ENCODE measurements at regions of chr14 and their contacts with region 1.

Region 1: GRCh38 chr14:97432586-97432985 is 635.4 kb downstream of the VRK1 start:
- DNase-seq: no peak
- ATAC-seq: no peak
- H3K4me3 Mint-ChIP-seq: no peak overlapping the region
- H3K27ac Mint-ChIP-seq: no peak overlapping the region
- H3K4me1 Mint-ChIP-seq: no peaks in the 10 kb centered on the region
- H3K27me3 Mint-ChIP-seq: no peaks in the 10 kb centered on the region

Region 2: DNA sequence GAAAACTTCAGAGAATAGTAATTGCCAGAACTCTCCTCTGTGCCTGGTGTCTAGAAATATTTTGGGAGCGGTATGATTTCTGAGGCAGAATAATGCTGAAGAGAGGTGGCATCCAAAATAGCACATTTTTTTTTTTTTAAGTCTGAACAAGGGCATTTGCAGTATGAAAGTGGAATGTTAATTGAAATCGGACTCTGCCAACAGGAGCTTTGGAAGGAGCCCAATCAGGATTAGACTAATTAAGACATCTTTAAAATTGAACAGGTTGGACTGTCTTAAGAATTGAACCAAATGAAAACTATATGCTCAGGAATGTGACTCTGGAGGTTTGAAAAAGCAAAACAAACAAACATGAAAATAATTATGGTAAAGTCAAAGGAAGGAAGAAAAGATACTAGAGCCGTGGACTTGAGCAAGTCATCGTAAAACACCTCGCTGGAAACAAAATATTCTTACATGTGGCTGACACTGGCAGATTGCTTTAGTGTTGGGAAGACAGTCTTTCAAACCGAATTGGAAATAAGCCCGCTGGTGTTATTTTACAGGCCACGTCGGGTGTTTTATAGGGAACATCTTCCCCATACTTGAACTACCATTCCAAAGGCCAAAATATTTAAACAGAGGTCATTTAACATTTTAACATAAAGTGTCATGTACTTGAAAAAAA is 199.1 kb before region 1 on chr14:
- CTCF ChIA-PET with region 1: no interaction called
- POLR2A ChIA-PET with region 1: no interaction called
- intact Hi-C with region 1: no loop called
- DNase-seq: no peak
- ATAC-seq: no peak
- H3K4me3 Mint-ChIP-seq: no peak overlapping the region
- H3K27ac Mint-ChIP-seq: no peak overlapping the region
- H3K4me1 Mint-ChIP-seq: no peaks in the 10 kb centered on the region
- H3K27me3 Mint-ChIP-seq: no peaks in the 10 kb centered on the region

Region 3: GRCh38 chr14:97499792-97500495 is 67.4 kb after region 1 on chr14:
- CTCF ChIA-PET with region 1: no interaction called
- POLR2A ChIA-PET with region 1: no interaction called
- intact Hi-C with region 1: loop called in 1 of 2 experiments (anchors 2 kb)
- DNase-seq: no peak
- ATAC-seq: no peak
- H3K4me3 Mint-ChIP-seq: no peak overlapping the region
- H3K27ac Mint-ChIP-seq: no peak overlapping the region
- H3K4me1 Mint-ChIP-seq: no peaks in the 10 kb centered on the region
- H3K27me3 Mint-ChIP-seq: no peaks in the 10 kb centered on the region

Region 4: DNA sequence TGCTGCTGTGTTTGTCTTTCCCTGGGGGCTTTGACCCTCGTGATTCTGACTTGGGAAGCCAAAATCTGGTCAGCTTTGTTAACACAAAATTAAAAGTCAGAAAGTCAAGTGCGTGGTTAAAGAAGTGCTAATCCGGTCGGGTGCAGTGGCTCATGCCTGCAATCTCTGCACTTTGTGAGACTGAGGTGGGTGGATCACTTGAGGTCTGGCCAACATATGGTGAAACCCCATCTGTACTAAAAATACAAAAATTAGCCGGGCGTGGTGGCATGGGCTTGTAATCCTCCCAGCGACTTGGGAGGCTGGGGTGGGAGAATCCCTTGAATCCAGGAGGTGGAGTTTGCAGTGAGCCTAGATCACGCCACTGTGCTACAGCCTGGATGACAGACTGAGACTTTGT is 209.2 kb after region 1 on chr14:
- CTCF ChIA-PET with region 1: no interaction called
- POLR2A ChIA-PET with region 1: no interaction called
- intact Hi-C with region 1: no loop called
- DNase-seq: peak; percentile 32
- ATAC-seq: peak; percentile 55
- H3K4me3 Mint-ChIP-seq: no peak overlapping the region
- H3K27ac Mint-ChIP-seq: peak overlapping the region; percentile 17
- H3K4me1 Mint-ChIP-seq: peaks cover 40% of the 10 kb centered on the region
- H3K27me3 Mint-ChIP-seq: no peaks in the 10 kb centered on the region

Region 5: GRCh38 chr14:97846156-97846555 is 413.6 kb after region 1 on chr14:
- CTCF ChIA-PET with region 1: no interaction called
- POLR2A ChIA-PET with region 1: no interaction called
- intact Hi-C with region 1: no loop called
- DNase-seq: no peak
- ATAC-seq: no peak
- H3K4me3 Mint-ChIP-seq: no peak overlapping the region
- H3K27ac Mint-ChIP-seq: no peak overlapping the region
- H3K4me1 Mint-ChIP-seq: peaks cover 5% of the 10 kb centered on the region
- H3K27me3 Mint-ChIP-seq: no peaks in the 10 kb centered on the region